ENCODE measurements at regions of chr5 and their contacts with region 1.

Region 1: GRCh38 chr5:73591102-73591695 is 25.7 kb downstream of the UTP15 start:
- H3K4me3 ChIP-seq: no peak overlapping the region
- H3K27ac ChIP-seq: no peak overlapping the region
- H3K4me1 ChIP-seq: 0 out of 2 replicates have a peak, but pooled peaks cover 3% of the 10 kb centered on the region
- CTCF ChIP-seq: peak; percentile 62

Region 2: GRCh38 chr5:73640861-73641320 is 49.7 kb after region 1 on chr5:
- CTCF ChIA-PET with region 1: interaction called, 10 read pairs
- POLR2A ChIA-PET with region 1: no interaction called
- H3K4me3 ChIP-seq: no peak overlapping the region
- H3K27ac ChIP-seq: no peak overlapping the region; the same call in 1 of the 2 replicates
- H3K4me1 ChIP-seq: peaks cover 43% of the 10 kb centered on the region
- CTCF ChIP-seq: no peak

Region 3: GRCh38 chr5:73693481-73694061 is 102.4 kb after region 1 on chr5:
- CTCF ChIA-PET with region 1: interaction called, 17 read pairs
- POLR2A ChIA-PET with region 1: no interaction called
- H3K4me3 ChIP-seq: no peak overlapping the region
- H3K27ac ChIP-seq: no peak overlapping the region
- H3K4me1 ChIP-seq: peaks cover 6% of the 10 kb centered on the region
- CTCF ChIP-seq: peak; percentile 37; the same call in 1 of the 2 replicates

Region 4: DNA sequence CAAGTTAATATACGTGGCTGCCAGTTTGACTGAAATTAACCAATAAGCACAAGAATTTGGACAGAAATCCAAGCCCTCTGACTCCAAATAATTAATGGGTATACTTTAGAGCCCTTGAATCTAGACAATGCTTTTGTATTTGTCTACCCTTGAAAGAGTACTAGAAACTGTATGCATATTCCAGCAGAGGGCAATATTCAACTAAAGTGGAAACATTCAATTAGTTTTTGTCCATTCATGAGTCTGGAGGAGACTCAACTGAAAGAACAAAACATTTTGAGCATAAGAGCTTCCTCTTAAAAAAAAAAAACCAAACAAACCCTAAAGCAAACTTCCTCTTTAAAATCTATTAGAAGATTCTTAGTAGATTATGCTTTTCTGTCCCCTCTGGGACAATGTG is 192.6 kb after region 1 on chr5:
- CTCF ChIA-PET with region 1: interaction called, 258 read pairs
- POLR2A ChIA-PET with region 1: no interaction called
- H3K4me3 ChIP-seq: no peak overlapping the region
- H3K27ac ChIP-seq: no peak overlapping the region
- H3K4me1 ChIP-seq: peaks cover 8% of the 10 kb centered on the region
- CTCF ChIP-seq: no peak

Region 5: DNA sequence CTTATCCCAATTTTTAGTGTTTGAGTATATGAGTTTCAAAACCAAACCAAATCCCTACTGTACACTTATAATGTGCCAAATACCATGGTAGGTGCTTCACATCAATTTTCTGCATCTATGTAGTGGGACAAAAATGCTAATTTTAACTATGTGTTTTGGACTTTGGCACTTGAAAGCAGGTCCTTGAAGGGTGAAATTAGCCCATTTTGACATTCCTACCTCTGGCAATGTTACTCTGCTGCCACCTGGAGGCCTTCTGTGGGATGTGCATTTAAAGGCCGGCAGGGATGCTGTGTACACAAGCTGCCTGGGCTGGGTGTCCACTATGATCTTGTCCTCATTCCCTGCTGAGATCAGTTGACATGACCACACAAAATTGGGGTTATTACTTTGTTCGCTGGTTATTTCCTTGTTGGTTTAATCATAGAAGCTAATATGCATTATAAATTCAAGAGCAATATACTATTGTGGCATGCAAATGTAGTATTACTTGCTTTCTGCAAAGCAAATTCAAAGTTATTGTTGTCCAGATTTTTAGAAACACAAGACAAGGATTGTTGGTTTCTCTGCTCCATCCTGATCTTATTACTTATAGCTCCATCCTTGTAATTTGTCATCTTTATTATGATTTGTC is 201.6 kb after region 1 on chr5:
- CTCF ChIA-PET with region 1: interaction called, 258 read pairs
- POLR2A ChIA-PET with region 1: no interaction called
- H3K4me3 ChIP-seq: no peak overlapping the region
- H3K27ac ChIP-seq: no peak overlapping the region
- H3K4me1 ChIP-seq: peaks cover 19% of the 10 kb centered on the region
- CTCF ChIP-seq: peak; percentile 83

Region 6: DNA sequence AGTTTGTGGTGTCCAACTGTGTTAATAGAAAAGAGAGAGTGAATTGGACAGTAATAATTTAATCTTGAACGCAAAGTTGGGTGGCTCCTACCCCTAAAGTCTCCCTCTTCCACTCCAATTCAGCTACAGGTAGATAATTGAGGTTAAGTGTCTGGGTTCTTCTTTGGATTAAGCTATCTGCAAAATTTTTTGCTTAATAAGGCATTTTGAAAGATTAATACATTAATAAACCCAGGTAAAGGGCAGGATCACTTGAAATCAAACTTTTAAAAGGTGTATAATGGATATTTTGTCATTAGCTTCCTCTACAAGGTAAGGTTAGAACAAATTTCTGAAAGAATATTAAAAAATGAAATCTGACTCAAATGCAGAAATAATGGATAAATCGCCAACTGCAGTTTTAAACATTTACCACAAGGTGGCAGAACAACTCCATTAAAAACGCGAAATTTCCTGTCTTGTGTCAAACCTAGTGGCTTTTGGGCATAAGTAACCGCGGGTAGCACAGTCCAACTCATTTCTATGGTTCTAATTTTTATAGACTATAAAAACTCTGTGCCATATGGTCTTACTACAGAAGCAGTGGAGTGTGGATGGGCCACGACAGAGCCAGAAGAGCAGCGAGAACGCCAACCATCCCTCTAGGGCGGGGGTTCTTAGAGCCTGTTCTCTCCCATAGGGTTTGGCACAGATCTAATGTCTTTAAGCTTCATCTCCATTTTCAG is 311.3 kb after region 1 on chr5:
- CTCF ChIA-PET with region 1: interaction called, 18 read pairs
- POLR2A ChIA-PET with region 1: no interaction called
- H3K4me3 ChIP-seq: no peak overlapping the region
- H3K27ac ChIP-seq: no peak overlapping the region
- H3K4me1 ChIP-seq: no peaks in the 10 kb centered on the region
- CTCF ChIP-seq: peak; percentile 69